ENCODE measurements at regions of chr4 and their contacts with region 1.

Region 1: GRCh38 chr4:188107931-188108843 is 1.2 kb downstream of the TRIML2 start:
- DNase-seq: peak; percentile 87
- H3K4me3 ChIP-seq: no peak overlapping the region
- H3K27ac ChIP-seq: peak overlapping the region; percentile 59
- H3K4me1 ChIP-seq: peaks cover 17% of the 10 kb centered on the region
- H3K27me3 ChIP-seq: no peaks in the 10 kb centered on the region
- CTCF ChIP-seq: no peak

Region 2: DNA sequence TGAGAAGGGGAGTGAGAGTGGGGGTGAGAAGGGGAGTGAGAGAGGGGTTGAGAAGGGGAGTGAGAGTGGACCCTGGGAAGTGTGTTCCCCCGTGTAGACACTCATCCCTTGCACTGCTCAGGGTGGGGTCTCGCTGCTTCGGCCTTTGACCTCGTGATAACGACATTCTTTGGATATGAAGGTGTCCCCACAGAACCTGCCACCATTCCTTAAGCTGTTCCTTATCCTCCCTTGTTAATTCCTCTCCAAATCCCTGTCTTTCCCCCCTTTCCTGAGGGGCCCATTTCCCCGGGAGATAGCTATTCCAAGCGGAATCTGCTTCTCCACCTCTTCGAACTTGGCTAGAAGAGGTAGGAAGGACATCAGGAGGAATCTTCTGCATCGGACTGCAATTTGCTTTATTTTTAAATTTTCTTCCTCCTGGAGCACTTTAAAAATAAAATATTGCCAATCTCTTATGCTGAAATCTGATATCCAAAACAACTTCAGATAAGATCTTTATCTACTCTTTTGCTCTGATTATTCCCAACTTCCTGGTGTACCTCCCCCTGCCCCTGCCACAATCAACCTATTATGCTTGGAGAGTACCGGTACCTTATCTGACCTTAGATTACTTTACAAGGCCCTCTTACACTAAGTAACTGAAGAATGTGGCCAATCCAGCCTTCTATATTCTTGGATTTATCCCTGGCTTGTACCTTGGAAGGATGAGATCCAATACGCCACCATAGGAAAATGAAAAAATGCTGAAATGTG is 46.7 kb after region 1 on chr4:
- CTCF ChIA-PET with region 1: no interaction called
- dilution Hi-C with region 1: loop called (anchors 5 kb)
- in situ Hi-C with region 1: no loop called
- intact Hi-C with region 1: no loop called
- DNase-seq: no peak
- H3K4me3 ChIP-seq: no peak overlapping the region
- H3K27ac ChIP-seq: no peak overlapping the region
- H3K4me1 ChIP-seq: no peaks in the 10 kb centered on the region
- H3K27me3 ChIP-seq: no peaks in the 10 kb centered on the region
- CTCF ChIP-seq: no peak

Measured in mammary epithelial cell (primary cell).